ENCODE measurements at regions of chr4 and their contacts with region 1.

Region 1: DNA sequence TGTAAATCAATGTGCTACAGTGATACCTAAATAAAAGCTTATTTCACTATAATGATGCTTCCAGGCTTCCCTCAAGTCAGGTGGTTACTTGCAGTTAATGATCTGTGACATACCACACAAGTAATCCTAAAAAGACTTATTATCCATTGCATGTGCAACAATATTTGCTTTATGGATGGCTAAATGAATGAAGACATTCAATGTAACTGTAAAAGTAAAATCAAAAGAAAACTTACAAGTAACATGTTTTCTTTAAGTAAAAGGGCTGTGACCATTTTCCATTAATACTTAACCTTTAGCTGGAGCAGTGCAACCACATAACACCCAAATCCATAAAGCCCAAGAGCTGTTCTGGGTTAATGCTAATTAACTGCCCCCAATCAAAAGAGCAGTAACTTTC is 42.6 kb downstream of the RAB28 start:
- DNase-seq: no peak
- ATAC-seq: no peak
- H3K4me3 ChIP-seq: no peak overlapping the region
- H3K27ac ChIP-seq: no peak overlapping the region
- H3K4me1 ChIP-seq: no peaks in the 10 kb centered on the region
- H3K27me3 ChIP-seq: no peaks in the 10 kb centered on the region
- CTCF ChIP-seq: no peak
- EP300 ChIP-seq: no peak
- POLR2A ChIP-seq: no peak
- RAD21 ChIP-seq: no peak

Region 2: DNA sequence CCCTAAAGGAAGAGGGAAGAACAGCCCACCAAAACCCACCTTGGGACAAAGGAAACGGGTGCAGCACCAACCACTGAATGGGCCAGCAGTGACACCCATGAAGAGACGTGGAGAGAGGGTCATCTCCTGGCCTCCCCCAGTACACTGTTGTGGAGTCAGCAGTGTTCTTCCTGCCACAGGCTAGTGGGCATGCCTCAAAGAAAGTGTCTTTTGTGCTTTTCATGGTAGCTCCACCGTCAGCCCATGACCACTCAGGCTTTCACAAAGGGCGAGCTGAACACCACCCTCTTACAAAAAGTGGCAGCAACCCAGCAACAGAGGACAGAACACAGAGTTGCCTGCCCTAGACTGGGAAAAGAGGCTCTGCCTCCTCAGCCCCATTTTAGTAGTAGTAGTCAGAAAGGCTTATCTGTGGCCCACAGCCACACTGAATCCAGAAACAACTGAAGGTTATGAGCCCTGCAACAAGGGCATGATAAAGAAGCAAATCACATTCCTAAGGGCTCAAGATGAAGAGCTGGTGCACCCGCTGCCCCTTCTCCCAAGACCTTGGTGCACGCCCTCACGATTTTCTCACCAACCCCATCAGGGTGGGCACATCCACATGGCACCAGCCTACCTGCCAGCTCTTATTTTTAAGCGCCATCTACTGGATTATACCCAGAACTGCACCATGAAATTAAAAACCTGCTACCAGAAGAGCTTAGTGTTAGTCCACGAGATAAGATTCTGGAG is 10.5 kb before region 1 on chr4:
- CTCF ChIA-PET with region 1: interaction called, 15 read pairs
- POLR2A ChIA-PET with region 1: interaction called, 3 read pairs
- RAD21 ChIA-PET with region 1: no interaction called
- SMC1A ChIA-PET with region 1: interaction called, 5 read pairs
- in situ Hi-C with region 1: no loop called
- intact Hi-C with region 1: no loop called
- DNase-seq: no peak
- ATAC-seq: peak; percentile 50; the same call in 2 of the 3 replicates
- H3K4me3 ChIP-seq: no peak overlapping the region
- H3K27ac ChIP-seq: no peak overlapping the region
- H3K4me1 ChIP-seq: no peaks in the 10 kb centered on the region
- H3K27me3 ChIP-seq: no peaks in the 10 kb centered on the region
- CTCF ChIP-seq: peak; percentile 15 to 28 (median 24); a peak in 3 of 6 replicates
- EP300 ChIP-seq: no peak
- POLR2A ChIP-seq: no peak
- RAD21 ChIP-seq: peak; percentile 46